Activated CD4-positive, alpha-beta T cell treated with anti-CD3 and anti-CD28 coated beads, Interleukin-2, amount 10 ng/mL, durations not matched to agents 24 days and 14 days (primary cell): ENCODE measurements at regions of chr6 and their contacts with region 1.

Region 1: DNA sequence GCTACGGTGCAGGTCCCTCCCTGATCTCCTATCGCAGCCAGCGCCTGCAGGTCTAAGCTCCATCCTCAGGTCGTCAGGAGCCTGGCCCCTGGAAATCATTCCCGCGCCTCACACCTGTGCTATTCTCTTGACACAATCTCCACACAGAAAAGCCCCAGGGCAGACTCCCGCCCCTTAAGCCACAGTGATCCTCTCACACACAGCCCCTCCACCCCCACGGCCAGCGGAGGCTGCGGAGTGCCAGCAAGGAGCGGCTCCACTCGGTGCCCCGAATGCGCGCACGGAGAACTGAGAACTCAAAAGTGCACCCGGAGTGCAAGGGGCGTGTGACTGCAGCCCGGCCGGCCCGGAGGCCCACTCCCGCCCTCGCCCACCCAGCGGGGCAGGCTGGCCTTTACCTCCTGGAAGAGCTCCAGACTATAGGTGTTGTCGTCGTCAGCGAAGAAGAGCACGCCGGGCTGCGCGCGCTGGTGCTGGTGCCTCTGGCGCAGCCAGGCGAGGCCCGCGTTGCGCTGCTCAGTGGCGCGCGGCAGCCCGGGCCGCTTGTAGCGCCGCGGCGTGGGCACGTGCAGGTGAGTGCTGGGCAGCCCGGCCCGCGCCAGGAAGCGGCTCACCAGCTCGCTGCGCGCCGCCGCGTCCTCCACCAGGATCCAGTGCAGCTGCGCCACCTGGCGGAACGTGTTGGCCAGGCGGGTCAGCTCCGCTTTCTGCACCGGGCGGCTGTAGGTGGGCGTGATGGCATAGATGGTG is 1.2 kb downstream of the B3GAT2 start:
- DNase-seq: peak; percentile 96
- H3K4me3 Mint-ChIP-seq: peak overlapping the region; percentile 85
- H3K27ac Mint-ChIP-seq: no peak overlapping the region
- H3K4me1 Mint-ChIP-seq: peaks cover 8% of the 10 kb centered on the region
- H3K27me3 Mint-ChIP-seq: peaks cover 80% of the 10 kb centered on the region

Region 2: GRCh38 chr6:70304616-70305015 is 651.0 kb before region 1 on chr6:
- intact Hi-C with region 1: loop called (anchors 10 kb)
- DNase-seq: no peak
- H3K4me3 Mint-ChIP-seq: no peak overlapping the region
- H3K27ac Mint-ChIP-seq: no peak overlapping the region
- H3K4me1 Mint-ChIP-seq: no peaks in the 10 kb centered on the region
- H3K27me3 Mint-ChIP-seq: peaks cover 7% of the 10 kb centered on the region

Region 3: GRCh38 chr6:70520575-70520974 is 435.0 kb before region 1 on chr6:
- intact Hi-C with region 1: loop called (anchors 10 kb)
- DNase-seq: peak; percentile 68
- H3K4me3 Mint-ChIP-seq: no peak overlapping the region
- H3K27ac Mint-ChIP-seq: no peak overlapping the region
- H3K4me1 Mint-ChIP-seq: peaks cover 4% of the 10 kb centered on the region
- H3K27me3 Mint-ChIP-seq: no peaks in the 10 kb centered on the region

Region 4: GRCh38 chr6:70667711-70668498 is 287.7 kb before region 1 on chr6 and contains the start of gene SMAP1:
- intact Hi-C with region 1: no loop called
- DNase-seq: peak; percentile 98
- H3K4me3 Mint-ChIP-seq: peak within 1 kb of the TSS; percentile 90
- H3K27ac Mint-ChIP-seq: peak within 1 kb of the TSS; percentile 94
- H3K4me1 Mint-ChIP-seq: peaks cover 52% of the 10 kb centered on the region
- H3K27me3 Mint-ChIP-seq: no peaks in the 10 kb centered on the region
- total RNA-seq, gene SMAP1: 21.5 and 23.2 TPM in 2 replicates

Region 5: GRCh38 chr6:70933853-70934252 is 21.8 kb before region 1 on chr6:
- intact Hi-C with region 1: no loop called
- DNase-seq: no peak
- H3K4me3 Mint-ChIP-seq: no peak overlapping the region
- H3K27ac Mint-ChIP-seq: no peak overlapping the region
- H3K4me1 Mint-ChIP-seq: no peaks in the 10 kb centered on the region
- H3K27me3 Mint-ChIP-seq: peaks cover 2% of the 10 kb centered on the region

Region 6: DNA sequence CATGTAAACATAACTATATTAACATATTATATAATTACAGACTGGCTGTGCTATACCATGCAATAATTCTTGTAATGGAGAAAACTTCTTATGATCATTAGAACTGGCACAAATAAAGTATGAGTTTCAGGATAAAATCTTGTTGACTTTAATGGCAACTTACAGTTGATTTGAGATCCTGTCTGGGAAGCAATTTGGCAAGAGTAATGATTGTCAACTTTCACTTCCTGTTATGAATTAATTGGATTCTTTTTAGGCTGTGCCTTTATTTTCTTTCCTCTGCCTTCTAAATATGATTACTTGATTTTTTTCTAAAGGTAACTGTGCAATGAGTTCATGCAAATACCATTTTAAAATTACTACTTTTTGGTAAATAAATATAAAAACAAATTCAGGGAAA is 159.4 kb after region 1 on chr6:
- intact Hi-C with region 1: no loop called
- DNase-seq: no peak
- H3K4me3 Mint-ChIP-seq: no peak overlapping the region
- H3K27ac Mint-ChIP-seq: no peak overlapping the region
- H3K4me1 Mint-ChIP-seq: no peaks in the 10 kb centered on the region
- H3K27me3 Mint-ChIP-seq: peaks cover 1% of the 10 kb centered on the region